Endothelial cell of umbilical vein (primary cell): ENCODE measurements at regions of chr1 and their contacts with region 1.

Region 1: GRCh38 chr1:206106328-206107167 is 10.6 kb downstream of the AVPR1B start:
- DNase-seq: peak; percentile 85
- H3K4me3 ChIP-seq: no peak overlapping the region
- H3K27ac ChIP-seq: no peak overlapping the region
- H3K4me1 ChIP-seq: peaks cover 5% of the 10 kb centered on the region
- H3K27me3 ChIP-seq: no peaks in the 10 kb centered on the region
- CTCF ChIP-seq: peak; percentile 87 to 88
- POLR2A ChIP-seq: no peak

Region 2: DNA sequence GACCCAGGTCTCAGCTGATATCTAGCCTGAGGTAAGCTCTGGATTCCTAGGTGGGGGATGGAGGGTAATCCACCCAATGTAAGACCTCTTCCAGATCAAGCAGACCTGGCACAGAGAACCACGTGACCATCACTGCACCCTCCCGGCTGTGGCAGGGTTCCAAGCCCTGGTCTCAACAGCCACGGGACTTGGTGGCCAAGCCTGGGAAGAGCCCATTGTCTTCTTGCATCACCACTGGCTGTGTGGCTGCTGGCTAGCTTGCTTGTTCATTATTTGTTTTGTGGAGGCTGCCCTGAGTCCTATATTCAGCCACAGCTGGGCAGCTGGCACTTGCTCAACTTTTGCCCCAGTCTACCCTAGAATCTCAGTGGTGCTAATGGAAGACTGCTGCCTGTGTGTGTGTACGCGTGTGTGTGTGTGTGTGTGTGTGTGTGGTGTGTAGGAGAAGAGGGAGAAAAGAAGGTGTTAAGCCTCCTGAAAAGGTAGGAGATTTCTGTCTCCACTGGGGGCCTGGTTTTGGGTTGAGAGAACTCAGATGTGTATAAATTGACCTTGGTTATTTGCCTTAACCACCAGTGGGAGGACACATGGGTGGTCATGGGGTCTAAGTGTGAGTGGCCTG is 1259.9 kb before region 1 on chr1:
- CTCF ChIA-PET with region 1: no interaction called
- POLR2A ChIA-PET with region 1: no interaction called
- dilution Hi-C with region 1: no loop called
- intact Hi-C with region 1: no loop called
- DNase-seq: no peak
- H3K4me3 ChIP-seq: no peak overlapping the region
- H3K27ac ChIP-seq: no peak overlapping the region
- H3K4me1 ChIP-seq: no peaks in the 10 kb centered on the region
- H3K27me3 ChIP-seq: no peaks in the 10 kb centered on the region
- CTCF ChIP-seq: no peak
- POLR2A ChIP-seq: no peak

Region 3: DNA sequence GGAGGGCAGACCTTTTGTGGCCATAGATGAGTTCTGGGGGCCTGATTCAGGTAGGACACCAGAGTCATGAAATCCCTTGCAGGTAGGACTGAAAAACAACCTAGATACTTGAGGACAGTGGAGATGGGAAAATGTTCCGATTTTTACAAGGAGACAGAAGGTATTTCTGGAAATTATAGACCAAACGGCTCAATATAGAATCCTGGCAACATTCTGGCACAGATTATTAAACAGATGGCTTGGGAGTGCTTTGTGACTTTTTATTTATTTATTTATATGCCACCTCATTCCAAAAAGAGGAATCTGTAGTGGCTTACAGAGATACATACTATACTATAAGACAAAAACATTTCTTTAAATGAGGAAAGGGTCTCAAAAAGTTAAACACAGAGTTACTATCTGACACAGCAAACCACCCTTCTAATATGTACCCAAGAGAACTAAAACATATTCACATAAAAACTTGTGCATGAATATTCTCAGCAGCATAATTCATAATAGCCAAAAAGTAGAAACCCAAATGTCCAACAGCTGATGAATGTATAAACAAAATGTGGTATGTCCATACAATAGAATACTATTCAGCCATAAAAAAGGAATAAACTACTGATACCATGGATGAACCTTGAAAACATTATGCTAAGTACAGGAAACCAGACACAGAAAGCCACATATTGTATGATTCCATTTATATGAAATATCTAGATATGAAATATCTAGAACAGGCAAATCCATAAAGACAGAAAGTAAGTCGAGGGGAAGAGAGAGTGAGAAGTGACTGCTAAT is 552.3 kb before region 1 on chr1:
- CTCF ChIA-PET with region 1: no interaction called
- POLR2A ChIA-PET with region 1: no interaction called
- dilution Hi-C with region 1: no loop called
- intact Hi-C with region 1: no loop called
- DNase-seq: no peak
- H3K4me3 ChIP-seq: no peak overlapping the region
- H3K27ac ChIP-seq: no peak overlapping the region
- H3K4me1 ChIP-seq: no peaks in the 10 kb centered on the region
- H3K27me3 ChIP-seq: peaks cover 10 to 14% of the 10 kb centered on the region in 2 experiments
- CTCF ChIP-seq: no peak
- POLR2A ChIP-seq: no peak

Region 4: GRCh38 chr1:205791568-205792180 is 314.9 kb before region 1 on chr1:
- CTCF ChIA-PET with region 1: interaction called, 38 read pairs
- POLR2A ChIA-PET with region 1: no interaction called
- dilution Hi-C with region 1: no loop called
- intact Hi-C with region 1: loop called (anchors 5 kb)
- DNase-seq: peak; percentile 53
- H3K4me3 ChIP-seq: no peak overlapping the region
- H3K27ac ChIP-seq: no peak overlapping the region
- H3K4me1 ChIP-seq: no peaks in the 10 kb centered on the region
- H3K27me3 ChIP-seq: no peaks in the 10 kb centered on the region
- CTCF ChIP-seq: peak; percentile 71 to 86
- POLR2A ChIP-seq: no peak

Region 5: GRCh38 chr1:205827623-205828022 is 278.9 kb before region 1 on chr1:
- CTCF ChIA-PET with region 1: no interaction called
- POLR2A ChIA-PET with region 1: no interaction called
- dilution Hi-C with region 1: no loop called
- intact Hi-C with region 1: no loop called
- DNase-seq: no peak
- H3K4me3 ChIP-seq: no peak overlapping the region
- H3K27ac ChIP-seq: no peak overlapping the region
- H3K4me1 ChIP-seq: no peaks in the 10 kb centered on the region
- H3K27me3 ChIP-seq: peaks cover 5 to 14% of the 10 kb centered on the region in 2 experiments
- CTCF ChIP-seq: no peak
- POLR2A ChIP-seq: no peak

Region 6: GRCh38 chr1:205983925-205984725 is 122.4 kb before region 1 on chr1:
- CTCF ChIA-PET with region 1: interaction called, 319 read pairs
- POLR2A ChIA-PET with region 1: no interaction called
- dilution Hi-C with region 1: loop called (anchors 25 kb)
- intact Hi-C with region 1: loop called (anchors 1 kb)
- DNase-seq: peak; percentile 57
- H3K4me3 ChIP-seq: no peak overlapping the region
- H3K27ac ChIP-seq: no peak overlapping the region
- H3K4me1 ChIP-seq: peaks cover 30% of the 10 kb centered on the region
- H3K27me3 ChIP-seq: no peaks in the 10 kb centered on the region
- CTCF ChIP-seq: peak; percentile 84 to 96
- POLR2A ChIP-seq: no peak

Region 7: DNA sequence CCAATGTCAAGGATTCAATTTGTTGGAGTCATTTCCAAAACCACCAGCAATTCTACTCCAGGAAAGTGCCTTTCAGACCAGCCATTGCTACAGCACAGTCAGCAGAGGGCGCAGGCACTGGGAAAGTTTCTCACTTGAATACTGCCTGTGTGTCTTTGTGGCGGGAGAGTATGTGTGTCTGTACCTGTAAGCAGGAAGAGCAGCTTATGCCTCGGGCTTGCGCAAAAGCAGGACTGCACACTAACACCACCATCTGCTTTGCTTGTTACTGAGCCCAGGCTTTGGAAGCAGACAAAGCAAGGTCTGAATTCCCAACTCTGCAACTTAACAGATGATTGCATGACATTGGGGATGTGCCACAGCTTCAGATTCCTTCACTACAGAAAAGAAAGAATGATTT is 75.8 kb before region 1 on chr1:
- CTCF ChIA-PET with region 1: interaction called, 139 read pairs
- POLR2A ChIA-PET with region 1: no interaction called
- dilution Hi-C with region 1: no loop called
- intact Hi-C with region 1: loop called (anchors 1 kb)
- DNase-seq: peak; percentile 75
- H3K4me3 ChIP-seq: no peak overlapping the region
- H3K27ac ChIP-seq: no peak overlapping the region
- H3K4me1 ChIP-seq: peaks cover 32% of the 10 kb centered on the region
- H3K27me3 ChIP-seq: no peaks in the 10 kb centered on the region
- CTCF ChIP-seq: peak; percentile 86
- POLR2A ChIP-seq: no peak

Region 8: GRCh38 chr1:206120403-206120802 is 13.9 kb after region 1 on chr1:
- CTCF ChIA-PET with region 1: interaction called, 10 read pairs
- POLR2A ChIA-PET with region 1: no interaction called
- dilution Hi-C with region 1: no loop called
- intact Hi-C with region 1: no loop called
- DNase-seq: no peak
- H3K4me3 ChIP-seq: no peak overlapping the region
- H3K27ac ChIP-seq: no peak overlapping the region
- H3K4me1 ChIP-seq: peaks cover 4% of the 10 kb centered on the region
- H3K27me3 ChIP-seq: peaks cover 15 to 45% of the 10 kb centered on the region in 2 experiments
- CTCF ChIP-seq: no peak
- POLR2A ChIP-seq: no peak